Activated CD8-positive, alpha-beta T cell treated with anti-CD3 and anti-CD28 coated beads, Interleukin-2, amount 10 ng/mL, durations not matched to agents 7 days and 5 days (primary cell): ENCODE measurements at regions of chr10 and their contacts with region 1.

Region 1: DNA sequence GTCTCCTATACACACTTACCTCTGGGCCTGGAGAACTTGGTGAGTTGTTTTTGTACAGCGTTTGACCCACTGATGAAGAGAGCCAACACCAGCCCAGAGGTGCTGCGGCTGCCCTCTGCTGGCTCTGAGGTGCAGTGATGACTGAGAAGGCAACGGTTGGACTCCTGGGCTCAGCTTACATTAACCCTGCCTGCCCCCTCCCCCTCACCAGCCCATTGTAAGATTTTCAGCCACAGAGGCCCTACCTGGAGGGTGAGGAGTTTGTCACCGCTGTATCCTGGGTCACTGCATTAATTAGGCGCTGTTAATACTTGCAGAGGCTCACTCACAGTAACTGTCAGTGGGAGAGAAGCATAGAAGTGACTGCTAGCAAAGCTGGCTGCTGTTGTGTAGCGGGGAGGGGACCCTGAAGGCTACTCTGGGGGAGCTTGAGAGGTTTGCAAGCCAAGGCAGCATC is 19.0 kb upstream of the ANKRD2 start:
- DNase-seq: peak; percentile 65
- ATAC-seq: peak; percentile 98
- H3K4me3 Mint-ChIP-seq: no peak overlapping the region
- H3K27ac Mint-ChIP-seq: no peak overlapping the region
- H3K4me1 Mint-ChIP-seq: no peaks in the 10 kb centered on the region
- H3K27me3 Mint-ChIP-seq: peaks cover 4% of the 10 kb centered on the region

Region 2: DNA sequence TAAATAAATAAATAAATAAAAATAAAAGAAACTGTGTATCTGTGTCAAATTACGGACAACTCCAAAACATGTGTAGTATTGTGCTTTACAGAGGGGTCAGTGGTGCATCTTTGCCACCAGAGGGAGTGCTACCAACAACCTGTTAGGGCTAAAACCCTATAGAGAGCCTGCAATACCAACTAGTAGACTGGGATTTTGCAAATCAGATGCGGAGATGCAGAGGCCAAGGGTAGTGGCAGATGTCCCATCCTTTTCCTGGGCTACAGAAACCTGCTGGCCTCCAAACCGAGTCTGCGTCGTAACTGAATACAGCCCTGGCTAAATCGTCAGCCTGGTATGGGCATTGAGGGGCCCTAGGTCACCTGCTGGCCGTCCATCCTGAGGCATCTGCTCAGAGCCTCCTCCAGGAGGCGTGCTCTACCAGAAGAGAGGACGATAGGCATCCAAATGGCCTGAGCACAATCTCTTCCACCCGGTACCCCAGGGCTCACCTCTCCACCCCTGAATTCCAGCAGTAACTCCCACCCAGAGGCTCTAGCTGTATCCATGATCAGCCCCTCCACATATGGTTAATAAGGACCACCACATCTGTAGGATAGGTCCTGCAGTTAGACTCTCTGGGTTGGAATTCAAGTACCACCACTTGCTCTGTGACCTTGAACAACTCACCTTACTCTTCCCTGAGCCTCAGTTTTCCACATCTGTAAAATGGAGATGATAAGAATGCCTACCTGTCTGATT is 146.2 kb before region 1 on chr10:
- CTCF ChIA-PET with region 1: interaction called, 13 read pairs
- POLR2A ChIA-PET with region 1: no interaction called
- DNase-seq: peak; percentile 79
- ATAC-seq: peak; percentile 95
- H3K4me3 Mint-ChIP-seq: peak overlapping the region; percentile 29
- H3K27ac Mint-ChIP-seq: peak overlapping the region; percentile 73
- H3K4me1 Mint-ChIP-seq: peaks cover 19% of the 10 kb centered on the region
- H3K27me3 Mint-ChIP-seq: no peaks in the 10 kb centered on the region

Region 3: DNA sequence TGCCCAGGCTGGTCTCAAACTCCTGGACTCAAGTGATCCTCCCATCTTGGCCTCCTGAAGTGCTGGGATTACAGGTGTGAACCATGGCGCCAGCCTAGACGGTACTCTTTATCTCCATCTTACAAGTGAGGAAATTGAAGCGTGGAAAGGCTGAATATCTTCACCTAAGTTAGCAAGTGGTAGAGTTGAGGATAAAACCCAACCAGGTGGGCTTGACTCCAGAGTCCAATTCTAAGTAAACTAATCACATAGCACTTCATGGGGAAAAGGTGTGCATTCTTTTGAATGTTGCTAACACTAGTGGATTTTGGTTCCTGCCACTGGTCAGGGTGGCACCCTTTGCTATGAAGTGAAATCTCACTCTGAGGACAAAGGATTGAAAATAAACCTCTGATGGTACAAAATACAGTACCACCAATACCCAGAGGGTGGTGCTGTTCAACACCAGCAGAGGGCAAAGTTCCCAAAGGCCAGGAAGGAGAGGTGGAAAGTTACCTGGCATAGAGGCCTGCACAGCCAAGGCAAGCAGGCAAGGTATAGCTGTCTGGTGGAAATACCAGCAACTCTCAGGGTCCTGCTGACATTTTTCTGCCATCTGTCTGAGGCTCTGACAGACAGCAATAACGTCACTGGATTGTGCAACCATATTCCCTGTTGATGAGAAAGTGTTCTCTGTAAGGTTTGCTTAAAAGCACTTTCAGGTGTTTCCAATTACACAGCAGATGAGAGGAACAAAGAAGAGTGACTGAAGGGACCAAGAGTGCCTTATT is 90.1 kb before region 1 on chr10:
- CTCF ChIA-PET with region 1: interaction called, 49 read pairs
- POLR2A ChIA-PET with region 1: no interaction called
- DNase-seq: peak; percentile 54
- ATAC-seq: peak; percentile 54
- H3K4me3 Mint-ChIP-seq: no peak overlapping the region
- H3K27ac Mint-ChIP-seq: peak overlapping the region; percentile 3
- H3K4me1 Mint-ChIP-seq: no peaks in the 10 kb centered on the region
- H3K27me3 Mint-ChIP-seq: no peaks in the 10 kb centered on the region

Region 4: DNA sequence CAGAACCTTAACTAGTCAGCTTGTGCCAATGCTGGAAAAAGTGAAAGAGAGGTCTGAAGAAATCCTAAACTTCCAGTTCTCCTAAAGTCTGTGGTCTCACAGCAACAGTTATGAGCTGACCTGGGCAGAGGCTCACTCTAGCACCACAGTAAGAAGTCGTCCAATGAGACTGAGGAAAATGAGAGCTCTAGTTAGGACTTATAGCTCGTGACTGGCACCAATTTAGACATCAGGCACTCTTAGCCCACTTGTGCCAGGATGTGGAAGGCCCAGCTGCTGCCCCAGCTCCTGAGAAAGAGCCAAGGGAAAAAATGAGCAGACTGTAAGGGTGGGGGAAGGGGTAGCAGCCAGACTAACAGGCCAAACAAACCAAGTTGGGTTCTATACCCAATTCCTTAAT is 63.0 kb before region 1 on chr10:
- CTCF ChIA-PET with region 1: no interaction called
- POLR2A ChIA-PET with region 1: no interaction called
- DNase-seq: no peak
- ATAC-seq: no peak
- H3K4me3 Mint-ChIP-seq: no peak overlapping the region
- H3K27ac Mint-ChIP-seq: peak overlapping the region; percentile 35
- H3K4me1 Mint-ChIP-seq: peaks cover 23% of the 10 kb centered on the region
- H3K27me3 Mint-ChIP-seq: no peaks in the 10 kb centered on the region

Region 5: DNA sequence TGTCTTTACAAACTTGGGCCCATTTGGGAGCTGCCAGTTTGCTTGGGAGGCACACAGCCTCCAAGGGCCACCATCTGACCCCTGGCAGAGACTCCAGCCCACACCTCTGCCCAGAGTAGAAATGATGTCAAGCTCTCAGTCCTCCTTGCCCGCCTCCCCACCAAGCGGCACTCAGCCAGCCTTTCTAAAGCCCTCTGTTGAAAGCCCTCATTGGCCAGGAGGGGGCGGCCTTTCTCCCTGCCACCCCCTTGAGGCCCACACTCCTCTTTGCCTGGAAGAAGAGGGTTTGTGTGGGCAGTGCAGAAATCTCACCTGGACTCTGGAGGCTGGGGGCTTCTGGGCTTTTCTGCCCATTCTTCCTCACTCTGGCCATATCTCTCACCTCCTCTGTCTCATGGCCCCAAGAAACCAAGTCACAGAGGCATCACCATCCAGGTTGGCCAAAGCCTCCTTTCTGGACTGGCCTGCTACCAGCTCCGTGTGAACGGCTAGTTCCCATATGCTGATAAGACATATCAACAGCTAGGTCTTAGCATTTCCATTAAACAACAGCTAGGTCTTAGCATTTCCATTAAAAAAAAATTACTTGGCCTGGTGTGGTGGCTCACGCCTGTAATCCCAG is 18.7 kb before region 1 on chr10:
- CTCF ChIA-PET with region 1: interaction called, 11 read pairs
- POLR2A ChIA-PET with region 1: interaction called, 4 read pairs
- DNase-seq: peak; percentile 46
- ATAC-seq: peak; percentile 65
- H3K4me3 Mint-ChIP-seq: no peak overlapping the region
- H3K27ac Mint-ChIP-seq: no peak overlapping the region
- H3K4me1 Mint-ChIP-seq: no peaks in the 10 kb centered on the region
- H3K27me3 Mint-ChIP-seq: no peaks in the 10 kb centered on the region

Region 6: DNA sequence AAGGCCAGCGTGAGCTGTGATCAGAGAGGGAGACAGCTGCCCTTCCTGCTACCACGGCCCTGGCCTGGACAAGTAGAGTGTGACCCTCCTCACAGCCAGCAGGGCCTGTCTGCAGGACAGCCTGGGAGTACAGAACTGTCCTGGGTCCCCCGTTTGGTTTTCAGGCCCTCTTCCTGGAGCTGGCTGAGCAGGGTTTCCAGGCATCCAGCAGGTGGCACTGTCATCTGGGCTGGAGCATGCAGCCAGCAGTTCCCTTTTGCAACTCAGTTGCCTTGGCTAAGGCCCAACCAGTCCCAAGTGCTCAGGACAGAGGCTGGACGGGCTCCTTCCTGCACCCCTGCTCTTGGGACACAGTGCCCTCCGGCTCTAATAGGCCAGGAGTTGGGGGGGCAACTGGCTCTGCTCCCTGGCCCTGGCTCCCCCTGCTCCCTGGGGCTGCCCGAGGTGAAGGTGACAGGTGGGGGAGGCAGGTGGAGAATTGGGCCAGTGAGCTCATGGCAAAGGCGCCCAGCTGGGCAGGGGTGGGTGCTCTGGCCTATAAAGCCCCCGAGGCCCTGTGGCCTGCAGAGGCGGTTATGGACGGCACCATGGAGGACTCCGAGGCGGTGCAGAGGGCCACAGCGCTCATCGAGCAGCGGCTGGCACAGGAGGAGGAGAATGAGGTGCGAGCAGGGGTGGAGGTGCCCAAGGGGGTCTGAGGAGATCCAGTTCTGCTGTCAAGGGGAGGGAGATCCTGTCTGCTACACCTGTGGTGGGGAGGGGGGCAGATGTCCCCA is 18.8 kb after region 1 on chr10 and contains the start of gene ANKRD2:
- CTCF ChIA-PET with region 1: interaction called, 22 read pairs
- POLR2A ChIA-PET with region 1: interaction called, 3 read pairs
- DNase-seq: peak; percentile 76
- ATAC-seq: peak; percentile 84
- H3K4me3 Mint-ChIP-seq: no peak within 1 kb of the TSS
- H3K27ac Mint-ChIP-seq: no peak within 1 kb of the TSS
- H3K4me1 Mint-ChIP-seq: no peaks in the 10 kb centered on the region
- H3K27me3 Mint-ChIP-seq: no peaks in the 10 kb centered on the region
- total RNA-seq, gene ANKRD2: 0.26 TPM in 1 of 2 experiments, not detected in the other

Region 7: DNA sequence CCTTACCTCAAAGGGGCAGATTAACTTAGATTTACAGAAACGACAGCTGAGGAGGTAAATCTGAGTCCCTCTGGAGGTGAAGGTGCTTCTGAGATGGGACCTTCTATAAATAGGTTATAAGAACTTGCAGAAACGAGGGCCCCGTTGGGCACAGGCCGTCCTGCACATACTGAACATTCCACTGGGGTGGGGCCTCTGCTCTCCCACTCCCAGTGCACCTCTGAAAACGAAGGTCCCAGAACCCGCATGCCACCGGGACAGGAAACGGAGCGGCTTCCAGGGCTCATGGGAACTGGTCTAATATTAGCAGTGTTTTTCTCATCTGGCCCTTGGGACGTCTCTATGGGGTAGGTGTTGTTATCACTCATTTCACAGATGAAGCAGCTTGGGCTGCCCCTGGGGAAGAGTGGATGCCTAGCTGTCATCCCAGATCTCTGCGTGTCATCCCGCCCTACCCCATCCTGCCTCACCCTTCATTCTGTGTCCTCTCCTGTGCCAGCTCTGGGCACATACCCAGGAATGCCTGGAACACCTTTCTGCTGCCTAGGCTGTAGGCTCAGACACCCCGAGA is 55.5 kb after region 1 on chr10:
- CTCF ChIA-PET with region 1: no interaction called
- POLR2A ChIA-PET with region 1: no interaction called
- DNase-seq: no peak
- ATAC-seq: no peak
- H3K4me3 Mint-ChIP-seq: no peak overlapping the region
- H3K27ac Mint-ChIP-seq: no peak overlapping the region
- H3K4me1 Mint-ChIP-seq: no peaks in the 10 kb centered on the region
- H3K27me3 Mint-ChIP-seq: peaks cover 5% of the 10 kb centered on the region